ENCODE measurements at regions of chr18 and their contacts with region 1.

Region 1: GRCh38 chr18:45384137-45384961 is 230.9 kb upstream of the SLC14A2 start:
- ATAC-seq: peak; percentile 34 to 88 (median 86)
- H3K4me3 ChIP-seq: no peak overlapping the region
- H3K27ac ChIP-seq: no peak overlapping the region
- H3K4me1 ChIP-seq: peaks cover 6 to 26% of the 10 kb centered on the region in 2 donors

Region 2: GRCh38 chr18:43620936-43621335 is 1763.4 kb before region 1 on chr18:
- in situ Hi-C with region 1: loop called in 3 of 9 experiments (anchors 25 kb)
- ATAC-seq: peak; percentile 35 to 67 (median 43)
- H3K4me3 ChIP-seq: no peak overlapping the region
- H3K27ac ChIP-seq: no peak overlapping the region
- H3K4me1 ChIP-seq: no peaks in the 10 kb centered on the region

Region 3: DNA sequence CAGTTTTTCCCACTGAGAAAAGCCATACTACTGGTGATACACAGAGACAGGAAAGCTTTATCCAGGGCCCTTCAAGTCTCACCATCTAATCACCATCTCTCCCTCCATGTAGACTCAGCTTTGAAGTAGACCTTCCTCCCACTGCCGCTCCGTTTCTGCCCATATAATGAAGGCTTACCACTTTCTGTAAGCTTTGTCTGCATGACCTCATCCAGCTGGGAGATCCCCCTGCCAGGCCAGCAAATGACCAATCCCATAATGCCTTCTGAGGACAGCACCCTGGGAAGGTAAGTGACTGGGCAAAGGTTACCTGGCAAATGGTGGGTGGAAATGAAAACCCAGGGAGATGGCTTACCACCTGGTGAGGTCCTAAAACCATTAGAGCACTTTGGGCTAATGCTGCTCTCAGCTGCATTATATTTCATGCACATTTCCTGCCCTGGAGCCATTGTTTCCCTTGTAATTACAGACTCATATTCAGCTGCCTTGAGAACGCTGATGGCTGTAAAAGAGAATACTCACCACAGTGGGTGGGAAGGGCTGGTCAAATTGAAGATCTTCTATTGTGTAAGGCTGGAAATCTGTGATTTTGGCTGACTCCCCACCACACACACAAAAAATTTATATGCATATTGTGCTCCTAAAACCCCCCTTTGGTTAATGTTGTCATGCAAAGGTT is 1756.4 kb before region 1 on chr18:
- in situ Hi-C with region 1: loop called in 3 of 9 experiments (anchors 25 kb)
- ATAC-seq: peak in 3 of 8 experiments; percentile 92 to 97 (median 96)
- H3K4me3 ChIP-seq: no peak overlapping the region
- H3K27ac ChIP-seq: no peak overlapping the region
- H3K4me1 ChIP-seq: peaks cover 0 to 2% of the 10 kb centered on the region in 2 donors

Region 4: DNA sequence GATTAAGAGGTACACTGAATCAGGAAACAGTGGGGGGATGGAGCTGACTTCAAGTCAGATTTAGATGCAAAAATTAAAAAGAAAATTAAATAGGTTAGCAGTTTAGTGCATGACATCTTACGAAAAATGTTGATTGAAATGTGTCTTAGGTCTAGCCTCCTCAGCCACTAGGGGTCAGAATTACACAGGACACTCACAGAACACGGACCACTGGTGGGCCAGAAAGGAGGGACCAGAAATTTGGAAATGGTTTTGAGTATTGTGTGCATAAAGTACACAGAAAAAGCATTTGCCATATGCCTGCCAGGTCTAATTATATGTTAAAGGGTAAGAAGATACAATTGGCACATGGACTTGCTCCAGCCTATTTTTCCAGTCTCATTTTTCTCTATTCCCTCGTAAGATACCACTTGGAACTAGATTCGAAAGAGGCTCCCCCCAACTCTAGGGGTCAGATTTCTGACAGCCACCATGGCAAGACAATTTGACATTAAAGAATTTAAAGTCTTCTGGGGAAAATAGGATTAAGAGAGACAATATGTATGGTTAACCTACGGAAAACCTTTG is 1253.9 kb before region 1 on chr18:
- in situ Hi-C with region 1: loop called in 1 of 9 experiments (anchors 25 kb)
- ATAC-seq: peak in 5 of 8 experiments; percentile 40 to 85 (median 66)
- H3K4me3 ChIP-seq: no peak overlapping the region
- H3K27ac ChIP-seq: no peak overlapping the region
- H3K4me1 ChIP-seq: no peaks in the 10 kb centered on the region

Region 5: GRCh38 chr18:44679056-44679905 is 705.1 kb before region 1 on chr18:
- in situ Hi-C with region 1: loop called in 1 of 9 experiments (anchors 25 kb)
- ATAC-seq: peak; percentile 83 to 90 (median 88)
- H3K4me3 ChIP-seq: peak overlapping the region; percentile 83 to 88 (median 84)
- H3K27ac ChIP-seq: peak overlapping the region; percentile 92 to 97
- H3K4me1 ChIP-seq: peaks cover 13 to 14% of the 10 kb centered on the region in 2 donors

Region 6: GRCh38 chr18:45026162-45026561 is 358.2 kb before region 1 on chr18:
- in situ Hi-C with region 1: loop called in 1 of 9 experiments (anchors 25 kb)
- ATAC-seq: peak in 5 of 8 experiments; percentile 48 to 69 (median 56)
- H3K4me3 ChIP-seq: no peak overlapping the region
- H3K27ac ChIP-seq: no peak overlapping the region
- H3K4me1 ChIP-seq: peaks cover 6 to 21% of the 10 kb centered on the region in 2 donors

Region 7: GRCh38 chr18:45275367-45276113 is 108.8 kb before region 1 on chr18:
- in situ Hi-C with region 1: loop called in 1 of 9 experiments (anchors 25 kb)
- ATAC-seq: no peak
- H3K4me3 ChIP-seq: no peak overlapping the region
- H3K27ac ChIP-seq: no peak overlapping the region
- H3K4me1 ChIP-seq: no peaks in the 10 kb centered on the region

Region 8: DNA sequence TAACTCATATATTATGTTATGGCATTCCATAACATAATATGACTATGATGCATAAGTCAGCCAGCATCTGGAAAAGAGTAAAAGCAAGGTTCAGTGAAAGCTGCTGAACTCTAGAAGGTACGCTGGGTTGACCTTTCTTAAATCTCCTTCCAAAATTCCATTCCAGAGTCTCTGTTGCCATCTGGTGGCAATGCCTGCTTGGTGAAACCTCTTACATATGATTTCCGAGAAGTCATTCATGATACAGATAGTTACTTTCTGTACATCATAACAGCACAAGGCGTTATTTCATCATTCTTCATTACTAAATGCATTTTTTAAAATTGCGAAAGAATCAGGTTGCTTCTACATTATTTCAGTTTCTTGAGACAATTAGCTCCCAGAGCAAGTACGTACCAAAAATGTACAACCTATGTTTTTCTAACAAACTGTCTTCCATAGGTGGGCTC is 589.8 kb after region 1 on chr18:
- in situ Hi-C with region 1: no loop called
- ATAC-seq: peak in 6 of 8 experiments; percentile 41 to 88 (median 64)
- H3K4me3 ChIP-seq: no peak overlapping the region
- H3K27ac ChIP-seq: no peak overlapping the region
- H3K4me1 ChIP-seq: no peaks in the 10 kb centered on the region